Panc1 (cell line): ENCODE measurements at regions of chr1 and their contacts with region 1.

Region 1: GRCh38 chr1:173798078-173798477 is 26.4 kb upstream of the DARS2 start:
- DNase-seq: no peak
- ATAC-seq: no peak
- H3K4me3 ChIP-seq: no peak overlapping the region
- H3K27ac ChIP-seq: no peak overlapping the region
- H3K4me1 ChIP-seq: no peaks in the 10 kb centered on the region
- H3K27me3 ChIP-seq: no peaks in the 10 kb centered on the region
- CTCF ChIP-seq: no peak

Region 2: GRCh38 chr1:172991674-172992400 is 806.2 kb before region 1 on chr1:
- CTCF ChIA-PET with region 1: no interaction called
- POLR2A ChIA-PET with region 1: interaction called, 10 read pairs
- in situ Hi-C with region 1: no loop called
- intact Hi-C with region 1: no loop called
- DNase-seq: no peak
- ATAC-seq: no peak
- H3K4me3 ChIP-seq: no peak overlapping the region
- H3K27ac ChIP-seq: no peak overlapping the region
- H3K4me1 ChIP-seq: no peaks in the 10 kb centered on the region
- H3K27me3 ChIP-seq: no peaks in the 10 kb centered on the region
- CTCF ChIP-seq: no peak

Region 3: GRCh38 chr1:173590557-173590956 is 207.5 kb before region 1 on chr1:
- CTCF ChIA-PET with region 1: no interaction called
- POLR2A ChIA-PET with region 1: no interaction called
- in situ Hi-C with region 1: no loop called
- intact Hi-C with region 1: no loop called
- DNase-seq: peak; percentile 7
- ATAC-seq: peak; percentile 85
- H3K4me3 ChIP-seq: no peak overlapping the region
- H3K27ac ChIP-seq: no peak overlapping the region
- H3K4me1 ChIP-seq: no peaks in the 10 kb centered on the region
- H3K27me3 ChIP-seq: no peaks in the 10 kb centered on the region
- CTCF ChIP-seq: no peak

Region 4: DNA sequence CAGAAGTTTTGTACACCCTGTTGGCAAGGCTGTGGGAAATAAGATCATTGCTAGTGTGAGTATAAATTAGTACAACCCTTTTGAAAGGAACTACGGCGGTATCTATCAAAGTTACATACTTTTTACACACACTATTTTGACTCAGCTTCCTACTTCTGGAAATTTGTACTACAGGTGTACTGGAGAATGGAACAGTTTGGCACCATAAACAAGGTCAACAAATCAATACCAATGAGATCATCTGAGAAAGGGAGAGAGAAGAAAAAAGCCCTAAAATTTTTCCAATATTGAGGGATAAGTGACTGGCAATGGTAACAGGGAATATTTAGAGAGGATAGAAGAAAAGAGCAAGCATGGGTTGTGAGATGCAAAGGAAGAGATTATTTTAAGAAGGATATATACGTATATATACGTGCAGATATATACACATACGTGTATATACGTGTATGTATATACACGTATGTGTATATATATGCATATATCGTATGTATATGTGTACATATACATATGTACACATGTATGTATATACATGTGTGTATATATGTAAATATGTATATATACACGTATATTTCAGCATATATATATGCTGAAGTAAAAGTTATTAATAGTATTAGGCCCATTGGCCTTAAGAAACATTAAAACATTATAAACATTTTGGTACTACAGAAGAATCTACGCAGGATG is 55.7 kb before region 1 on chr1:
- CTCF ChIA-PET with region 1: no interaction called
- POLR2A ChIA-PET with region 1: no interaction called
- in situ Hi-C with region 1: no loop called
- intact Hi-C with region 1: no loop called
- DNase-seq: no peak
- ATAC-seq: no peak
- H3K4me3 ChIP-seq: no peak overlapping the region
- H3K27ac ChIP-seq: no peak overlapping the region
- H3K4me1 ChIP-seq: no peaks in the 10 kb centered on the region
- H3K27me3 ChIP-seq: no peaks in the 10 kb centered on the region
- CTCF ChIP-seq: no peak